Ovary (tissue), 10 donors: ENCODE measurements at regions of chr9 and their contacts with region 1.

Region 1: DNA sequence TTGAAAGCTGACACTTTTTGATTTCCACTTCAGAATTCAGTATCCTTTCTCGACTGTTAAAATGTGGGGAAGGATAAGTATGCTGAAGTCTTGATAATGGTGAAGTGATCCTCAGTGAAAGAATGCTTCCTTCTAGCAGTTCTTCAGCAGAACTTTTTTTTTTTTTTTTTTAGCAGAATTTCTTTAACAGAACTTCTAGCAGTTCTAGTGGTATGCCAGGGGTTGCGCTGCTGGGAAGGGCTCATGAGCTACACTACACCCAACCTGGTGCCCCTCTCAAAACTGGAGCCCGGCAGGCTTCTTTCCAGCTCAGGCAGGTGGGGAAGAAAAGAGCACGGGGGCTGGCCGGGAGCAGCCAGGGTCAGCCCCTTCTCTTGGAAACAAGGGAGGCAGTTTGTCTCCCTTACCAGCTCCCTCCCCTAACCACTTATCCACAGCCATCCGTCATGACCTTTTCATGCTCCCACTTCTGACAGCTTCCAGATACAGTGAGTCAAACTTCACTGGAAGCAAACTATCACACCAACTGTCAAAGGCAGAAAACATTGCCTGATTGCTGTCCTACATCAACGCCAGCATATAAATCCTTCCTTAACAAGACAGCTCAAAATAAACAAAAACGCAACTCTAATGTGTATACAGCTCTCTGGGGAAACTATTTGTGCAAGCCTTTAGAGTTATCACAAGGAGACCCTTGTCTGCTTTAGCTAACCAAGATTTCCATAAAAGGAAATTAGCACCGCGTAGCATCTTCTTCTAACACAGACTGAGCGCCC is 211.5 kb downstream of the GAPVD1 start:
- DNase-seq: peak; percentile 62 to 73 (median 67)
- H3K4me3 ChIP-seq: no peak overlapping the region
- H3K27ac ChIP-seq: peak overlapping the region in 1 of 2 donors; percentile 71
- H3K4me1 ChIP-seq: peaks cover 30% of the 10 kb centered on the region
- H3K27me3 ChIP-seq: no peaks in the 10 kb centered on the region
- CTCF ChIP-seq: no peak
- EP300 ChIP-seq: no peak
- POLR2A ChIP-seq: no peak

Region 2: GRCh38 chr9:125544988-125545651 is 72.0 kb after region 1 on chr9:
- intact Hi-C with region 1: loop called in 1 of 4 experiments (anchors 10 kb)
- DNase-seq: peak in 3 of 5 donors; percentile 33 to 54 (median 41)
- H3K4me3 ChIP-seq: no peak overlapping the region
- H3K27ac ChIP-seq: peak overlapping the region in 1 of 2 donors; percentile 58
- H3K4me1 ChIP-seq: peaks cover 39% of the 10 kb centered on the region
- H3K27me3 ChIP-seq: no peaks in the 10 kb centered on the region
- CTCF ChIP-seq: no peak
- EP300 ChIP-seq: no peak
- POLR2A ChIP-seq: no peak